ENCODE measurements at regions of chr17 and their contacts with region 1.

Region 1: GRCh38 chr17:42388381-42389134 is at the start of gene STAT3:
- DNase-seq: peak; percentile 100
- ATAC-seq: peak; percentile 78
- H3K4me3 ChIP-seq: peak within 1 kb of the TSS; percentile 92
- H3K4me3 Mint-ChIP-seq: peak within 1 kb of the TSS; percentile 97
- H3K27ac ChIP-seq: peak within 1 kb of the TSS; percentile 99 to 100
- H3K27ac Mint-ChIP-seq: peak within 1 kb of the TSS; percentile 99
- H3K4me1 ChIP-seq: peaks cover 26% of the 10 kb centered on the region
- H3K4me1 Mint-ChIP-seq: peaks cover 52% of the 10 kb centered on the region
- H3K27me3 ChIP-seq: no peaks in the 10 kb centered on the region
- H3K27me3 Mint-ChIP-seq: no peaks in the 10 kb centered on the region
- CTCF ChIP-seq: no peak
- total RNA-seq, gene STAT3: 315 to 319 TPM

Region 2: DNA sequence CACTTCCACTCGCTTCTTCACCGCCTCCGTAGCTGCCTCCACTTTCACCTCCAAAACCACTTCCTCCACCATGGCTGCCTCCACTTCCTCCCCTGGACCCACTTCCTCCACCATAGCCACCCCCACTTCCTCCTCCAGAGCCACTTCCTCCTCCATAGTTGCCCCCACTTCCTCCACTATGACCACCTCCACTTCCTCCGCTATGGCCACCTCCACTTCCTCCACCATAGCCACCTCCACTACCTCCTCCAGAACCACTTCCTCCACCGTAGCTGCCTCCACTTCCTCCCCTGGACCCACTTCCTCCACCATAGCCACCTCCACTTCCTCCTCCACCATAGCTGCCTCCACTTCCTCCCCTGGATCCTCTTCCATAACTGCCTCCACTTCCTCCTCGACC is 821.2 kb before region 1 on chr17:
- CTCF ChIA-PET with region 1: no interaction called
- POLR2A ChIA-PET with region 1: no interaction called
- intact Hi-C with region 1: no loop called
- DNase-seq: peak in 4 of 14 experiments; percentile 6 to 24 (median 10)
- ATAC-seq: peak; percentile 17
- H3K4me3 ChIP-seq: no peak overlapping the region
- H3K4me3 Mint-ChIP-seq: no peak overlapping the region
- H3K27ac ChIP-seq: peak overlapping the region; percentile 14 to 47
- H3K27ac Mint-ChIP-seq: peak overlapping the region; percentile 71
- H3K4me1 ChIP-seq: peaks cover 4% of the 10 kb centered on the region
- H3K4me1 Mint-ChIP-seq: peaks cover 19% of the 10 kb centered on the region
- H3K27me3 ChIP-seq: peaks cover 4 to 11% of the 10 kb centered on the region in 2 experiments
- H3K27me3 Mint-ChIP-seq: peaks cover 27% of the 10 kb centered on the region
- CTCF ChIP-seq: no peak

Region 3: GRCh38 chr17:42101513-42102319 is 286.8 kb before region 1 on chr17:
- CTCF ChIA-PET with region 1: no interaction called
- POLR2A ChIA-PET with region 1: no interaction called
- intact Hi-C with region 1: no loop called
- DNase-seq: peak; percentile 35 to 72 (median 51)
- ATAC-seq: peak; percentile 58
- H3K4me3 ChIP-seq: no peak overlapping the region
- H3K4me3 Mint-ChIP-seq: no peak overlapping the region
- H3K27ac ChIP-seq: no peak overlapping the region
- H3K27ac Mint-ChIP-seq: no peak overlapping the region
- H3K4me1 ChIP-seq: peaks cover 14% of the 10 kb centered on the region
- H3K4me1 Mint-ChIP-seq: no peaks in the 10 kb centered on the region
- H3K27me3 ChIP-seq: peaks cover 5 to 10% of the 10 kb centered on the region in 2 experiments
- H3K27me3 Mint-ChIP-seq: peaks cover 11% of the 10 kb centered on the region
- CTCF ChIP-seq: peak; percentile 80

Region 4: DNA sequence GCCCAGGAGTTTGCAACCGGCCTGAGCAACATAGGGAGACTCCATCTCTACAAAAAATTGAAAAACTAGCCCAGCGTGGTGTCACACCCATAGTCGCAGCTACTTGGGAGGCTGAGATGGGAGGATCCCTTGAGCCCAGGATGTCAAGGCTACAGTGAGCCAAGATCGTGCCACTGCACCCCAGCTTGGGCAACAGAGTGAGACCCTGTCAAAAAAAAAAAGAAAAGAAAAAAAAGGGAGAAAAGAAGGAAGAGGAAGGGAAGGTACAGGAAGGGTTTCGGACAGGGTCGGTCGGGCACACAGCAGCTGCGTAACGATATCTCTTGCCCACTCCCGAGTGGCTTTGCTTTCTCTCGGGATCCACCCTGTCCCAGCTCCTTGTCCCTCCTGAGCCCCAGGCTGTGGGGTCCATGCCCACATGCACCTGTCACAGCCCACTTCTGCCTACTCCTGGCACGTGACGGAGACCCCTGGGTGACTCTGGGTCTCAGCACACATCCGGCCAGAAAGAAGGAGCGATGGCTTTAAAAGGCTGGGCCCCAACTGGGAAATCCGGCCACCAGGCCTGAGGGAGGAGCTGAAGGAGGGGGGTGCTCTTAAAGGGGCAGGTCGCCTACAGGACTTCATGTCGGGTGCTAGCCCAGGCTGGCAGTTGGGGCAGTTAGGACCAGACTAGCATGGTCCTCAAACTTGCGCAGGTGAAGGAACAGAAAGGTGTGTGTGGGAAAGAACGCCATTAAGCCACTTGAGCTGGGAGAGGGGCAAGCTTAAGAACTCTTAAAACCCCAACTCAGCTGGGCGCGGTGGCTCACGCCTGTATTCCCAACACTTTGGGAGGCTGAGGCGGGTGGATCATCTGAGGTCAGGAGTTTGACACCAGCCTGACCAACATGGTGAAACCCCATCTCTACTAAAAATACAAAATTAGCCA is 194.3 kb before region 1 on chr17 and contains the start of gene GHDC:
- CTCF ChIA-PET with region 1: no interaction called
- POLR2A ChIA-PET with region 1: interaction called, 14 read pairs
- intact Hi-C with region 1: no loop called
- DNase-seq: peak; percentile 55 to 88 (median 73)
- ATAC-seq: peak; percentile 97
- H3K4me3 ChIP-seq: peak within 1 kb of the TSS; percentile 75
- H3K4me3 Mint-ChIP-seq: peak within 1 kb of the TSS; percentile 95
- H3K27ac ChIP-seq: peak within 1 kb of the TSS; percentile 34 to 39
- H3K27ac Mint-ChIP-seq: peak within 1 kb of the TSS; percentile 76
- H3K4me1 ChIP-seq: peaks cover 26% of the 10 kb centered on the region
- H3K4me1 Mint-ChIP-seq: peaks cover 18% of the 10 kb centered on the region
- H3K27me3 ChIP-seq: no peaks in the 10 kb centered on the region
- H3K27me3 Mint-ChIP-seq: no peaks in the 10 kb centered on the region
- CTCF ChIP-seq: no peak
- total RNA-seq, gene GHDC: 6.8 to 8.3 TPM

Region 5: GRCh38 chr17:42312285-42313130 is 76.0 kb before region 1 on chr17:
- CTCF ChIA-PET with region 1: interaction called, 9 read pairs
- POLR2A ChIA-PET with region 1: interaction called, 71 read pairs
- intact Hi-C with region 1: no loop called
- DNase-seq: peak; percentile 62 to 91 (median 73)
- ATAC-seq: peak; percentile 61
- H3K4me3 ChIP-seq: peak overlapping the region; percentile 40
- H3K4me3 Mint-ChIP-seq: peak overlapping the region; percentile 80
- H3K27ac ChIP-seq: peak overlapping the region; percentile 41 to 64
- H3K27ac Mint-ChIP-seq: peak overlapping the region; percentile 82
- H3K4me1 ChIP-seq: peaks cover 66% of the 10 kb centered on the region
- H3K4me1 Mint-ChIP-seq: peaks cover 82% of the 10 kb centered on the region
- H3K27me3 ChIP-seq: no peaks in the 10 kb centered on the region
- H3K27me3 Mint-ChIP-seq: no peaks in the 10 kb centered on the region
- CTCF ChIP-seq: peak; percentile 59

Region 6: GRCh38 chr17:42373896-42374295 is 14.7 kb before region 1 on chr17:
- CTCF ChIA-PET with region 1: interaction called, 6 read pairs
- POLR2A ChIA-PET with region 1: interaction called, 37 read pairs
- intact Hi-C with region 1: no loop called
- DNase-seq: no peak
- ATAC-seq: no peak
- H3K4me3 ChIP-seq: no peak overlapping the region
- H3K4me3 Mint-ChIP-seq: no peak overlapping the region
- H3K27ac ChIP-seq: no peak overlapping the region
- H3K27ac Mint-ChIP-seq: no peak overlapping the region
- H3K4me1 ChIP-seq: peaks cover 15% of the 10 kb centered on the region
- H3K4me1 Mint-ChIP-seq: peaks cover 49% of the 10 kb centered on the region
- H3K27me3 ChIP-seq: no peaks in the 10 kb centered on the region
- H3K27me3 Mint-ChIP-seq: no peaks in the 10 kb centered on the region
- CTCF ChIP-seq: no peak

Region 7: GRCh38 chr17:42422958-42423712 is 34.6 kb after region 1 on chr17 and contains the start of gene CAVIN1:
- CTCF ChIA-PET with region 1: no interaction called
- POLR2A ChIA-PET with region 1: interaction called, 12 read pairs
- intact Hi-C with region 1: no loop called
- DNase-seq: peak in 1 of 14 experiments; percentile 19
- ATAC-seq: peak; percentile 35
- H3K4me3 ChIP-seq: peak within 1 kb of the TSS; percentile 50
- H3K4me3 Mint-ChIP-seq: peak within 1 kb of the TSS; percentile 88
- H3K27ac ChIP-seq: no peak within 1 kb of the TSS
- H3K27ac Mint-ChIP-seq: no peak within 1 kb of the TSS
- H3K4me1 ChIP-seq: peaks cover 24% of the 10 kb centered on the region
- H3K4me1 Mint-ChIP-seq: peaks cover 16% of the 10 kb centered on the region
- H3K27me3 ChIP-seq: peaks cover 21 to 28% of the 10 kb centered on the region in 2 experiments
- H3K27me3 Mint-ChIP-seq: peaks cover 27% of the 10 kb centered on the region
- CTCF ChIP-seq: no peak
- total RNA-seq, gene CAVIN1: 0.14 to 0.16 TPM

Region 8: DNA sequence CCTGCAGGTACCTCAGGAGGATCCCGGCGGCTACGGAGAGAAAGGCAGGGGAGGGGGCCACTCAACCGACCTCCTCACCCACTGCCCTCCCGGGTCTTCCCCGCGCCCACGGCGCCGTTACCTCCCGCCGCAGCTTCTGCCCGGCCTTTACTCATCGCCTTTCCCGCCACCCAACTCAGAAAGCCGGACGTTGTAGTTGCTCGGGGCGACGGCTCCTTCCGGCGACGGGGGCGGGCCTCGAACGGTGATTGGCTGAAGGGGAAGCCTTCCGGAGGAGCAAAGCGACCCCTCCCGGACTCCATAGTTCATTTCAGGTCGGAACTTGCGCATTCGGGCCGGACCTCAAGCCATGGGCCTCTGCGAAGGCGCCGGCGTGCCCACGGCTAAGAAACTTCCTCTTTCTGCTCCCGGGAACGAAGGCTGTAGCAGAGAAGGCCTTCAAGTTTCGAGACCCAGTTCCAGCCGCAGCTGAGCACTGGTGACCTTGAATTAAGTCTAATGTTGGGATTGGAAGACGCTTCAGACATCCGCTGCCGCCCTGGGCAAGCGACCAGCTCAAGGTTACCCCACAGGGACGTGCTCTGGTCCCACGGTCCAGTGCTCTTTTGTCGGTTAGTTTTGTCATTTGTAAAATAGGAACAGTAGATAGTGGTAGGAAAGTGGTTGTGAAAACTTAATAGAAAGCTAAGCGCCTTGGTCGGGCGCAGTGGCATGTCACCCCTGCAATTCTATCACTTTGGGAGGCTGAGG is 189.1 kb after region 1 on chr17 and contains the start of gene PSMC3IP:
- CTCF ChIA-PET with region 1: no interaction called
- POLR2A ChIA-PET with region 1: interaction called, 10 read pairs
- intact Hi-C with region 1: no loop called
- DNase-seq: peak; percentile 81 to 95 (median 90)
- ATAC-seq: peak; percentile 89
- H3K4me3 ChIP-seq: peak within 1 kb of the TSS; percentile 67
- H3K4me3 Mint-ChIP-seq: peak within 1 kb of the TSS; percentile 97
- H3K27ac ChIP-seq: peak within 1 kb of the TSS; percentile 49 to 67
- H3K27ac Mint-ChIP-seq: peak within 1 kb of the TSS; percentile 80
- H3K4me1 ChIP-seq: peaks cover 21% of the 10 kb centered on the region
- H3K4me1 Mint-ChIP-seq: peaks cover 32% of the 10 kb centered on the region
- H3K27me3 ChIP-seq: no peaks in the 10 kb centered on the region
- H3K27me3 Mint-ChIP-seq: no peaks in the 10 kb centered on the region
- CTCF ChIP-seq: peak; percentile 53
- total RNA-seq, gene PSMC3IP: 2.6 to 3.4 TPM